Sigmoid colon (tissue), 7 donors: ENCODE measurements at regions of chr18 and their contacts with region 1.

Region 1: GRCh38 chr18:58392324-58393000 is 236.4 kb downstream of the ALPK2 start:
- DNase-seq: no peak
- H3K4me3 ChIP-seq: no peak overlapping the region
- H3K27ac ChIP-seq: peak overlapping the region; percentile 61 to 83 (median 72)
- H3K4me1 ChIP-seq: peaks cover 0 to 58% (median 49%) of the 10 kb centered on the region in 4 donors
- H3K27me3 ChIP-seq: no peaks in the 10 kb centered on the region
- CTCF ChIP-seq: no peak
- EP300 ChIP-seq: peak in 1 of 4 donors; percentile 53
- POLR2A ChIP-seq: no peak

Region 2: GRCh38 chr18:58231930-58232329 is 160.5 kb before region 1 on chr18:
- intact Hi-C with region 1: no loop called
- DNase-seq: no peak
- H3K4me3 ChIP-seq: no peak overlapping the region
- H3K27ac ChIP-seq: peak overlapping the region; percentile 14 to 62 (median 59)
- H3K4me1 ChIP-seq: peaks cover 0 to 39% (median 23%) of the 10 kb centered on the region in 4 donors
- H3K27me3 ChIP-seq: no peaks in the 10 kb centered on the region
- CTCF ChIP-seq: peak in 2 of 4 experiments; percentile 28 to 29
- EP300 ChIP-seq: no peak
- POLR2A ChIP-seq: no peak

Region 3: GRCh38 chr18:58447402-58448095 is 55.1 kb after region 1 on chr18:
- intact Hi-C with region 1: loop called (anchors 5 kb)
- DNase-seq: peak; percentile 70
- H3K4me3 ChIP-seq: no peak overlapping the region
- H3K27ac ChIP-seq: peak overlapping the region in 3 of 4 donors; percentile 63 to 72 (median 68)
- H3K4me1 ChIP-seq: peaks cover 0 to 27% (median 21%) of the 10 kb centered on the region in 4 donors
- H3K27me3 ChIP-seq: no peaks in the 10 kb centered on the region
- CTCF ChIP-seq: no peak
- EP300 ChIP-seq: no peak
- POLR2A ChIP-seq: no peak

Region 4: DNA sequence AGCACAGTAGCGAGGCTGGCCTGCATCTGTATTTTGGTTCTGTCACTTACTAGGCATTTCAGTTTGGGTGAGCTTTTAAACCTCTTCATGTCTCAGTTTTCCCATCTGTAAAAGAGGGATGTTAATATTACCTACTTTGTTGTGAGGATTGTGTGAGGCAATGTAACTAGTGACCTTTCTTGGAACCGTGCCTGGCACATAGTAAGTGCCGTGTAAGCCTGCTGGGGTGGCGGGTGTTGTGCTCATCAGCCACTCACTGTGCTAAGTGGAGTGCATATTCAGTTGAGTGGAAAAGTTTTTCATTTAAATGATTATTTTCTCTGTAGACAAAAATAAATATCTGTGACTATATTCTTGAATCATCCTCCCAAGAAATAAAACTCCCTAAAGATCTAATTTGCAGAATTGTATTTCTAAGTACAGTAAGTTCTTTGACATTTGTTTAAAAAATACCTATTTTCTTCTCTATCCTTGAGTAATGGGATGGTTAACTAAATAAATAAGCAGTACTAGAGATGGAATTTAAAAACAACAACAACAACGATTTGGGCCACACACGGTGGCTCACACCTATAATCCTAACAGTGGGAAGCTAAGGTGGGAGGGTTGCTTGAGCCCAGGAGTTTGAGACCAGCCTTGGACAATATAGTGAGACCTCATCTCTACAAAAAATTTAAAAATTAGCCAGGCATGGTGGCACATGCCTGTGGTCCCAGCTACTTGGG is 335.5 kb after region 1 on chr18:
- intact Hi-C with region 1: no loop called
- DNase-seq: no peak
- H3K4me3 ChIP-seq: no peak overlapping the region
- H3K27ac ChIP-seq: no peak overlapping the region
- H3K4me1 ChIP-seq: no peaks in the 10 kb centered on the region
- H3K27me3 ChIP-seq: no peaks in the 10 kb centered on the region
- CTCF ChIP-seq: no peak
- EP300 ChIP-seq: no peak
- POLR2A ChIP-seq: no peak